Activated T-helper 1 cell treated with anti-CD3 and anti-CD28 coated beads, Interleukin-12 subunit alpha, Interleukin-12 subunit beta, Interleukin-2, Interleukin-4 antibody, amounts not matched to agents 30 ng/mL and 10 ng/mL and 1 ng/mL, durations not matched to agents 14 hours and 24 hours and 36 hours (primary cell): ENCODE measurements at regions of chr6 and their contacts with region 1.

Region 1: GRCh38 chr6:44338228-44339122 is 4.0 kb upstream of the SPATS1 start:
- DNase-seq: peak; percentile 55
- H3K4me3 Mint-ChIP-seq: no peak overlapping the region
- H3K27ac Mint-ChIP-seq: no peak overlapping the region
- H3K4me1 Mint-ChIP-seq: peaks cover 7% of the 10 kb centered on the region
- H3K27me3 Mint-ChIP-seq: peaks cover 32% of the 10 kb centered on the region

Region 2: DNA sequence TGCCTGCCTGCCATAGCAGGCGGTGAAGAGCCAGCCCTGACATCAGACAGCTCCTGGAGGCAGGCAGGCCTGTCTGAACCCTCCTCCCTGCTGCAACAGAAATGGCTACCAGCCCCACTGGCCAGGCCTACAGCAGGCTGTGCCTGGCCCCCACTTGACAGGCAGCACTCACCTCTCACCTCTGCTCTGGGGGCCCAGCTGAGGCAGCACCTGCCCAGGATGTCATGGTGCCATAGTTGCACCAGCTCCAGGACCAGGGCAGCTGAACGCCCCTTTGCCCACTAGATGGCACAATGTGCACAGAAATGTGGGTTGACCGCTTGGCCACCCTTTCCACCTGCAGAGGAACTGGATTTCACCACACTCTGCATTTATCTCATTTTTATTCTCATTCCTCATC is 241.9 kb before region 1 on chr6:
- intact Hi-C with region 1: loop called (anchors 1 kb)
- DNase-seq: peak; percentile 59
- H3K4me3 Mint-ChIP-seq: no peak overlapping the region
- H3K27ac Mint-ChIP-seq: no peak overlapping the region
- H3K4me1 Mint-ChIP-seq: peaks cover 7% of the 10 kb centered on the region
- H3K27me3 Mint-ChIP-seq: no peaks in the 10 kb centered on the region

Region 3: GRCh38 chr6:44312901-44313788 is 25.3 kb before region 1 on chr6 and contains the start of gene AARS2:
- intact Hi-C with region 1: loop called (anchors 2 kb)
- DNase-seq: peak; percentile 89
- H3K4me3 Mint-ChIP-seq: peak within 1 kb of the TSS; percentile 99
- H3K27ac Mint-ChIP-seq: peak within 1 kb of the TSS; percentile 94
- H3K4me1 Mint-ChIP-seq: peaks cover 18% of the 10 kb centered on the region
- H3K27me3 Mint-ChIP-seq: peaks cover 13% of the 10 kb centered on the region
- total RNA-seq, gene AARS2: 22.2 and 23.0 TPM in 2 replicates

Region 4: DNA sequence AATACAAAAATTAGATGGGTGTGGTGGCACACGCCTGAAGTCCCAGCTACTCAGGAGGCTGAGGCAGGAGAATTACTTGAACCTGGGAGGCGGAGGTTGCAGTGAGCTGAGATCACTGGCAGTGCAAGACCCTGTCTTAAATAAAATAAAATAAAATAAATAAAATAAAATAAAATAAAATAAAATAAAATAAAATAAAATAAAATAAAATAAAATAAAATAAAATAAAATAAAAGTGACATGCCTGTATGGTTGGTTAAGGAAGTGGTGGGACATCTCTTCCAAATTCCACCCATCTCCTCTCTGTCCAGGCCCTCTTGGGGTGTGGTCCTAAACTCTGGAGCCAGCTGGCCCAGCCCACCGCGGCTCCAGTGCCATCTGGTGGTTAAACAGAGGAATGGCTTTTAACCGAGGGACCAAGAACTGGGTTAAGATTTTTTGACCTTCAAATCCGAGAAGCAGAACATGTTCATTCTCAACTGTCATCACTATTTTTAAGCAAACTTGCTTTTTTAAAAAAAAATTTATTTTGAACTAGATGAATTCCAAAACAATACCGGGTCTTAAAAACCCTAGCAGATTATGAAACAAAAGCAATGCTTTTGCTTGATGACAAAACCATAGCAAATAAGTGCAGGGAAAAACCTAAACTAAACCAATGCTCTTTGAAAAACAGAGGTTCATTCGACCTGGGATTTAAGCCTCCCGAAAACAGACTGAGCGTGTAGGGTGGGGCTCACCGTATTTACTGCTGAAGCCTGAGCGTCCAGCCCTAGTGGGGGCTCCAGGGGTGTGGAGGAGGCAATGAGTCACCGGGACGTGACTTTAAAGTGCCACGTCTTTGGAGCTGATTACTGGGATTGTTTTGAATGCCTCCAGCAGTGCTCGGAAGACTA is 117.8 kb after region 1 on chr6:
- intact Hi-C with region 1: loop called (anchors 5 kb)
- DNase-seq: no peak
- H3K4me3 Mint-ChIP-seq: no peak overlapping the region
- H3K27ac Mint-ChIP-seq: no peak overlapping the region
- H3K4me1 Mint-ChIP-seq: no peaks in the 10 kb centered on the region
- H3K27me3 Mint-ChIP-seq: peaks cover 5% of the 10 kb centered on the region